Activated CD8-positive, alpha-beta T cell treated with anti-CD3 and anti-CD28 coated beads, Interleukin-2, amount 10 ng/mL, durations not matched to agents 7 days and 5 days (primary cell): ENCODE measurements at regions of chr2 and their contacts with region 1.

Region 1: DNA sequence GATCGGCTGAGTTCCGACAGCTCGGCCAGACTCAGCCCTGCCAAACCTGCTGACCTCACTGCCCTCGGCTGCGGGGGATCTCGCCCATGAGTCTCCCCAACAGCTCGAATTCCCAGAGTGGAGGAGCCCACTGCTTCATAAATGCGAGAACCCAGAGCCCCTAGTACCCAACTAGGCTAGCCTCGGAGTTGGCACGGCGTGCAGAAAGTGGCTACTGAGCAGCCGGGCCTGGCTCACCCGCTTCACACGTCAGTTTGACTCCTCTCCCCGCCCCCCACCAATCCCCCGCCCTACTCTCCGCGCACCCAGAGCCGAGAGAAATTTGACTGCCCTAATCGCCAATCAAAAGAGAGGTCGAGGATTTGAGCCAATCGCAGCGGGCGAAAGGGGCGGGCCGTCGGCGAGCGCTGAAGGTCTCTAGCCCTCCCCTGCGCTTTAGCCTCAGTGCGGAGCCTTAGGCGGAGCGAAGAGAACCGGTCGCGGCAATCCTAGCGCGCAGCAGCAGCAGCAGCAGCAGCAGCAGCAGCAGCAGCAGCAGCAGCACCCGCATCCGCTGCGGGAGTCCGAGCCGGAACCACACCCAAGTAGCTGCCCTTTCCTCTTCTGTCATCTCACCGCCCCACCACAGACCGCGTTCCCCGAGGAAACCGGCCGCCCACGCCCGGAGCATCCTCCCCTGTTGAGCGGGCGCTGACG is at the start of gene GLS:
- DNase-seq: peak; percentile 98
- ATAC-seq: peak; percentile 81
- H3K4me3 Mint-ChIP-seq: peak within 1 kb of the TSS; percentile 94
- H3K27ac Mint-ChIP-seq: peak within 1 kb of the TSS; percentile 99
- H3K4me1 Mint-ChIP-seq: peaks cover 36% of the 10 kb centered on the region
- H3K27me3 Mint-ChIP-seq: no peaks in the 10 kb centered on the region
- total RNA-seq, gene GLS: 162 to 193 TPM

Region 2: DNA sequence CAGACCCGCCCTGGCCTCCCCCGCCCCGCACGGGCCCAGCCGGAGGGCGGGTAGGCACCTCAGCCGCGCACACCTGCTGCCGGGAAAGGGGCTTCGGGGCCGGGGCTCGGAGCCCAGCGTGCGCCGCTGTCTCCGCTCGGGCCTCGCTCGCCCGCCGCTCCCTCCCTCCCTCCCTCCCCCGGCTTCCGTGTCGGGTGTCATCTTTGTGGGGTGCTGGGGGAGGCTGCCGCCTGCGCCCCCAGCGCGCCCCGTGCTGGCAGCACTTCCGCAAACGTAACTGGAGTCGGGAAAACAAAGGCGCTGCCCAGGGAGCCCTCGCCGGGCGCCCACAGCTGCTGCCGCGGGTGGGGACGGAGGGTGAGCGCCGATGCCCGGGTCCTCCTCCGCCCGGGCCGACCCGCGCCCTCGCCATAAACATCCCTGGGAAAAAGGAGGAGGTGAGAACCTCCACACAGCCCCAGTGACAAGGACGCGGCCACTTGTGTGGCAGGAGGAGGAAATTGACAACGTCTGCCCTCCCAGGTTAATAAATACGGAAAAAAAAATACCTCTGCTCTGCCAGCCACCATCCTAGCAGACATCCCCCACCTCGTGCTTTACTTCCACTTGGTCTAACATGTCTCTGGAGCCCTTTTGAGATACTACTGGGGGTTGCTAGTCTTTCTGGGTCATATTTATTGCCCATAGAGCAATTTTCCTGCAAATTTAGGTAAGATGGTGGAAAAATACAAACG is 471.8 kb before region 1 on chr2:
- CTCF ChIA-PET with region 1: no interaction called
- POLR2A ChIA-PET with region 1: interaction called, 10 read pairs
- DNase-seq: peak; percentile 81
- ATAC-seq: peak; percentile 50
- H3K4me3 Mint-ChIP-seq: peak overlapping the region; percentile 87
- H3K27ac Mint-ChIP-seq: peak overlapping the region; percentile 94
- H3K4me1 Mint-ChIP-seq: peaks cover 39% of the 10 kb centered on the region
- H3K27me3 Mint-ChIP-seq: no peaks in the 10 kb centered on the region

Region 3: GRCh38 chr2:190534310-190535120 is 346.0 kb before region 1 on chr2 and contains the start of gene NEMP2:
- CTCF ChIA-PET with region 1: no interaction called
- POLR2A ChIA-PET with region 1: interaction called, 19 read pairs
- DNase-seq: peak; percentile 86
- ATAC-seq: peak; percentile 80
- H3K4me3 Mint-ChIP-seq: peak within 1 kb of the TSS; percentile 95
- H3K27ac Mint-ChIP-seq: peak within 1 kb of the TSS; percentile 99
- H3K4me1 Mint-ChIP-seq: peaks cover 56% of the 10 kb centered on the region
- H3K27me3 Mint-ChIP-seq: no peaks in the 10 kb centered on the region
- total RNA-seq, gene NEMP2: 18.4 to 23.2 TPM

Region 4: GRCh38 chr2:190759749-190760213 is 120.7 kb before region 1 on chr2:
- CTCF ChIA-PET with region 1: no interaction called
- POLR2A ChIA-PET with region 1: no interaction called
- DNase-seq: no peak
- ATAC-seq: no peak
- H3K4me3 Mint-ChIP-seq: peak overlapping the region; percentile 3
- H3K27ac Mint-ChIP-seq: no peak overlapping the region
- H3K4me1 Mint-ChIP-seq: no peaks in the 10 kb centered on the region
- H3K27me3 Mint-ChIP-seq: no peaks in the 10 kb centered on the region

Region 5: GRCh38 chr2:190849774-190850173 is 30.8 kb before region 1 on chr2:
- CTCF ChIA-PET with region 1: interaction called, 33 read pairs
- POLR2A ChIA-PET with region 1: interaction called, 7 read pairs
- DNase-seq: no peak
- ATAC-seq: no peak
- H3K4me3 Mint-ChIP-seq: no peak overlapping the region
- H3K27ac Mint-ChIP-seq: no peak overlapping the region
- H3K4me1 Mint-ChIP-seq: no peaks in the 10 kb centered on the region
- H3K27me3 Mint-ChIP-seq: peaks cover 2% of the 10 kb centered on the region

Region 6: DNA sequence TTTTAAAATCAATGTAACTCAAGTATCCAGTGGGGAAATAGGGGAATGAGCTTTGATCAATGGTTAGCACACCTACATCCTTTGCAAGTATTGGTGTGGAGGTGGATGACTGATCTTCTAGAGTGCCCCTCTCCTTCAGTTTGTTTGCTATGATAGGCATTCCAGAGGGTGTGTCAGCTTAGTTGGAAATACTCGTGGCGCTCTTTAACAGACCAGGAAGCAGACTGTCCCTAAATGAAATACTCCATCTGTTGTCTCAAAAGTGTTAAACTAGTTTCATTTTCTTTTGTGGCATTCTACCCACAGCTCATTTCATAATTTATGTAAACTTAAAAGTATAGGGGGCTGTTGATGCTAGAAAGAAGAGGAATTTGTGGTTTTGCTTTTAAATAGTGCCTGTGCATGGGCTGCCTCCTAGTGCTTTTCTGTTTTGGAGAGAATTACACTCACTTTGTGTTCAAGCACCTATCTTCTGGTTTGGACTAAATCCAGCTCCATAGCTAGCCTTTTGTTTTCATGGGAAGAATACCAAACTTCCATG is 67.3 kb after region 1 on chr2:
- CTCF ChIA-PET with region 1: interaction called, 24 read pairs
- POLR2A ChIA-PET with region 1: interaction called, 19 read pairs
- DNase-seq: no peak
- ATAC-seq: peak; percentile 72
- H3K4me3 Mint-ChIP-seq: no peak overlapping the region
- H3K27ac Mint-ChIP-seq: peak overlapping the region; percentile 41
- H3K4me1 Mint-ChIP-seq: peaks cover 12% of the 10 kb centered on the region
- H3K27me3 Mint-ChIP-seq: peaks cover 5% of the 10 kb centered on the region

Region 7: GRCh38 chr2:191020221-191020741 is 139.8 kb after region 1 on chr2:
- CTCF ChIA-PET with region 1: no interaction called
- POLR2A ChIA-PET with region 1: interaction called, 12 read pairs
- DNase-seq: peak; percentile 94
- ATAC-seq: peak; percentile 75
- H3K4me3 Mint-ChIP-seq: no peak overlapping the region
- H3K27ac Mint-ChIP-seq: no peak overlapping the region
- H3K4me1 Mint-ChIP-seq: peaks cover 38% of the 10 kb centered on the region
- H3K27me3 Mint-ChIP-seq: no peaks in the 10 kb centered on the region

Region 8: GRCh38 chr2:191086706-191087105 is 206.2 kb after region 1 on chr2:
- CTCF ChIA-PET with region 1: no interaction called
- POLR2A ChIA-PET with region 1: no interaction called
- DNase-seq: no peak
- ATAC-seq: no peak
- H3K4me3 Mint-ChIP-seq: no peak overlapping the region
- H3K27ac Mint-ChIP-seq: no peak overlapping the region
- H3K4me1 Mint-ChIP-seq: peaks cover 38% of the 10 kb centered on the region
- H3K27me3 Mint-ChIP-seq: no peaks in the 10 kb centered on the region